ENCODE measurements at regions of chr12 and their contacts with region 1.

Region 1: GRCh38 chr12:57744777-57745484 is at the start of gene TSPAN31:
- DNase-seq: peak; percentile 85
- H3K4me3 ChIP-seq: peak within 1 kb of the TSS; percentile 98
- CTCF ChIP-seq: no peak

Region 2: DNA sequence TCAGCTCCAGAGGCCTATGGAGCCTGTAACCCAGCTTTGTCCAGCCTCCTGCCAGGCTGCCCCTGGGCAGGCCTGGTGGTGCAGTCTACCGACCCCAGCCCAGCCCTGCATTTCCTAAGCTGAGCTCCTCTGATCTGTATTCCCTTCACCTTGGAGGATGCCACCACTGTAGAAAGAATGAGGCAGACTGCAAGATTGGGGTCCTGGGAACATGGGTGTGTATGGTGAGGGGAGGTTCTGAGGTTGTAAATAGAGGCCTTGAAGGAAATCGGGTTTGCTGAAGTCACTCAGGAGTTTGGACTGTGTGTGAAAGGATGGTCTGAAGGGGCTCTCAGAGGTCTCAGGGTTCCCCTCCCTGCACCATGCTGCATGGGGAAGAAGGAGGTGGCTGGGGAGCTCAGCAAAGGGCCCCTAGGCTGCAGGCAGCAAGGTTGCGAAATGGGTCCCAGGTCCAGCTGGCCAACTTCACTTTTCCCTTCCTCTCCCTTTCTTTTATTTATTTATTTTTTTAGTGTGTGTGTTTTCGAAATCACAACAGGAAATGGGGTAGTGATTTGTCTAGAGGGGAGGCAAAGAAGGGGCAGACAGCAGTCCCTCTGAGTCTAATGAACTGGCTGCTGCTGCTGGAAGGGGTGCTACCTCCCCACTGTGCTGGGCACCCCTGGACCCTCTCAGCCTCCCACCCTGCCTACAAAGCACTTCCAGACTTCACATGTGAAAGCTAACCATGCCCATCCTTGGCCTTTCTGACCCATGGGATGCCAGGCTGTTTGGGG is 596.3 kb before region 1 on chr12:
- CTCF ChIA-PET with region 1: no interaction called
- POLR2A ChIA-PET with region 1: no interaction called
- DNase-seq: no peak
- H3K4me3 ChIP-seq: peak overlapping the region; percentile 3; the same call in 1 of the 2 replicates
- CTCF ChIP-seq: no peak

Region 3: DNA sequence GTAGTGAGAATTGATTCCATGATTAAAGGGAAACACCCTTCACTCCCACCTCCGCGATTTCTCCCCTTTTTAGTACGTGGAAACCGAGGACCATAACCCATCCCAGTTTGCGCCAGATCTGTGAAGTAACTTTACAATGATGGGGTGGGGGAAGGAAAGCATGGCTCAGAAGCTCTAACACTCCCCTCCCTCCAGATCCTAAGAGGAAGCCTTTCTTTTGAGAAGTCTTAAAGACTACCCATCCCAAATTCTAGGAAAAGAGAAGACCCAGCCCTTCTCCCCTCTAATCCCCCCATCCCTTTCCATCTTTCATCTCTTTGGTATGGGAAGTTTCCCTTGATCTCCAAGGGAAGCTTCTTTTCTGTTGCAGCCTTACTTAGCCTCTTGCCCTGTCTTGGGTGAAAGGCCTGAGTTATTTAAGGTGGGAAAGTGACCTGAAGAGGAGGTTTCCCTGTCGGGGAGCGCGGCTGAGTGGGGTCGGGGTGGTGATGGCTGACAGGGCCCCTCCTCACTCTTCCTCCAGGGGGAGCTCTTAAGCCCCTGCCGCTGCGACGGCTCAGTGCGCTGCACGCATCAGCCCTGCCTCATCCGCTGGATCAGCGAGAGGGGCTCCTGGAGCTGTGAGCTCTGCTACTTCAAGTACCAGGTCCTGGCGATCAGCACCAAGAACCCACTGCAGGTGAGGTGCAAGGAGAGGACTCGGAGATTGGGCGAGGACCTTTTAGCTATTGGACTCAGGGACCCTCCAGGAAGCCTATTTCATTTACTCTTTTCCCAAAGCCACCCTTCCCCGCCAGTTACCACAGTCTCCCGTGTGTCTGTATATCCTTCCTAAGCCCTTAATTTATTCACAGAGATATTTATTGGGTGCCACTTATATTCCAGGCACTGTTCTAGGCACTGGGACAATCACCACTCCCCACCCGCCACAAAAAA is 11.7 kb after region 1 on chr12:
- CTCF ChIA-PET with region 1: interaction called, 16 read pairs
- POLR2A ChIA-PET with region 1: no interaction called
- DNase-seq: no peak
- H3K4me3 ChIP-seq: peak overlapping the region; percentile 56; the same call in 1 of the 2 replicates
- CTCF ChIP-seq: peak; percentile 83

Measured in AG04449 (cell line).